ENCODE measurements at regions of chr17 and their contacts with region 1.

Region 1: GRCh38 chr17:52636443-52636842 is 477.9 kb upstream of the CA10 start:
- DNase-seq: no peak
- ATAC-seq: no peak
- H3K4me3 ChIP-seq: no peak overlapping the region
- H3K27ac ChIP-seq: no peak overlapping the region
- H3K4me1 ChIP-seq: no peaks in the 10 kb centered on the region
- H3K27me3 ChIP-seq: no peaks in the 10 kb centered on the region
- CTCF ChIP-seq: no peak
- POLR2A ChIP-seq: no peak
- RAD21 ChIP-seq: no peak

Region 2: GRCh38 chr17:52686140-52686539 is 49.7 kb after region 1 on chr17:
- CTCF ChIA-PET with region 1: no interaction called
- POLR2A ChIA-PET with region 1: no interaction called
- dilution Hi-C with region 1: no loop called
- in situ Hi-C with region 1: no loop called
- intact Hi-C with region 1: no loop called
- DNase-seq: no peak
- ATAC-seq: no peak
- H3K4me3 ChIP-seq: no peak overlapping the region
- H3K27ac ChIP-seq: no peak overlapping the region
- H3K4me1 ChIP-seq: no peaks in the 10 kb centered on the region
- H3K27me3 ChIP-seq: no peaks in the 10 kb centered on the region
- CTCF ChIP-seq: no peak
- POLR2A ChIP-seq: no peak
- RAD21 ChIP-seq: no peak

Region 3: GRCh38 chr17:53133876-53134275 is 497.4 kb after region 1 on chr17:
- CTCF ChIA-PET with region 1: no interaction called
- POLR2A ChIA-PET with region 1: interaction called, 16 read pairs
- dilution Hi-C with region 1: no loop called
- in situ Hi-C with region 1: no loop called
- intact Hi-C with region 1: no loop called
- DNase-seq: no peak
- ATAC-seq: no peak
- H3K4me3 ChIP-seq: no peak overlapping the region
- H3K27ac ChIP-seq: no peak overlapping the region
- H3K4me1 ChIP-seq: no peaks in the 10 kb centered on the region
- H3K27me3 ChIP-seq: no peaks in the 10 kb centered on the region
- CTCF ChIP-seq: no peak
- POLR2A ChIP-seq: no peak
- RAD21 ChIP-seq: no peak